ENCODE measurements at regions of chr21 and their contacts with region 1.

Region 1: DNA sequence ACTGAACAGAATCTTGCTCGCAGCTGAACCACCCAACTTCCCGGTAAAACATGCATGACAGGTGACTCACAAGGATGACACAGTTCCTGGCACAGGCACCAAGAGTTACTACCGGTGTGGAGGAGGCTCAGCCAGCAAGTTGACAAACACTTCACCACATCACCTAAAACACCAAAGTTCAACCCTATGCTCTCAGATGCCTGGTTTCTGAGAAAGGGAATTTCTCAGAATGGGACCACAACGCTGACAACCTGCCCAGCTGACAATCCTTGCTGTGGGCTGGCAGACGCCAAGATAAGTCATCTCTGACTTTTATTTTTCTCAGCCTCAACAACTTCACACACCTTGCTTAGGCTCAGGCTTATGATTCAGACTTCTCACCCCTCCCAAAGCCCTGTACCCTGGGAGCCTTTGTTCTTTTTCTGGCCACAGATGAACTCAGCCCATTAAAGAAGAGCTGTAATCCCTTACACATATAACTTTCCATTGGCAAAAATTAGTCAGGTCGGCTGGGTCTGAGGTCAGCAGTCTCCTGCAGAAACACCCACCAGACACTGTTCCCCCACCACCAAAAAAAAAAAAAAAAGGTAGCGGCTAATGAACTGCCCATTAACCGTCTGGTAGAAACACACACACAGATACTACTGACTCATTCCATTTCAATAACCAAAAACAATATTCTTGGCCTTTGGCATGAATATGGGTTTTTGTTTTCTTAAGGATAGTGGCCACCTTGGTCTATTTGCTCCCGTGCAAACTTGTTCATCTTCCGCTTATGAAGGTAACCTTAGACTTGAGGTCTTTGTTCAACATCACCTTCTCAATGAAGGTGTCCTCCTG is 10.8 kb upstream of the TIAM1 start:
- DNase-seq: peak; percentile 70
- ATAC-seq: peak; percentile 95
- H3K4me3 Mint-ChIP-seq: peak overlapping the region; percentile 43
- H3K27ac Mint-ChIP-seq: peak overlapping the region; percentile 85
- H3K4me1 Mint-ChIP-seq: peaks cover 35% of the 10 kb centered on the region
- H3K27me3 Mint-ChIP-seq: no peaks in the 10 kb centered on the region

Region 2: DNA sequence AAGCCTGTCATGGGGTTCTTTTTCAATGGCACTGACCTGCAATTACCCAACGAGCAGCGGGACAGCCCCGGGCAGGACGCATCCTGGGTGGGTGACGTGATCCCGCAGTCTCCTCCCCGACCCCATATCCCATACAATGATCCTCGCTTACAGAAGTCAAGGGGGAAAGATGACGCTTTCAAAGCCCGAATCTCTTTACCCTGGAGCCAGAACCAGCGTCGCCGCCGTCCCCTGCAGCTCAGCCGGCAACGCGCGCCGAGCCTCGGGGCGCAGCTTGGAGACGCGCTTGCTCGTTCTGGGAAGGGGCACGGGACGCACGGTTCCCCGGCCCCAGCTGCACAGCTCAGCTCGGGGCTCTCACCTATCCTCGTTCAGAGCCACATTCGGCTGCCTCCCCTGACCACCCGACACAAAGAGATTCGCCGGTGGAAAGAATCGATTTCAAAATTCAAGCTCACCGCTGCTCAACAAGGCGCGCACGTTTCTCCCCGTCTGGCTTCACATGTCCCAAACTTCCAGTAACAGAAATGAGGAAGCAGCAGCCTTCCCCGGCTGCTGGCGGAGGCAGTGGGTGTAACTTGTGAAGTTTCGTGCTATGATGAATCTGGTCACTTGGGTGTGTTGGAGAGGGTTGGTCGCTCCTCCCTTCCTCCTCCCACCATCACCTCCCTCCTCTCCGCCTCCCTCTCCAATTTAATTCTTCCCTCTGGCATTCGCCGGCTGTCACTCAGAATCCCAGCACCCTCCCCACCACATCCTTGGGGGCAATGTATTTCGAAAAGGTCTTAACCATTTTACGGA is 10.9 kb before region 1 on chr21 and contains the start of gene TIAM1:
- POLR2A ChIA-PET with region 1: interaction called, 10 read pairs
- DNase-seq: peak; percentile 40
- ATAC-seq: peak; percentile 61
- H3K4me3 Mint-ChIP-seq: peak within 1 kb of the TSS; percentile 90
- H3K27ac Mint-ChIP-seq: peak within 1 kb of the TSS; percentile 73
- H3K4me1 Mint-ChIP-seq: peaks cover 40% of the 10 kb centered on the region
- H3K27me3 Mint-ChIP-seq: peaks cover 41% of the 10 kb centered on the region
- total RNA-seq, gene TIAM1: 21.8 to 23.7 TPM

Region 3: DNA sequence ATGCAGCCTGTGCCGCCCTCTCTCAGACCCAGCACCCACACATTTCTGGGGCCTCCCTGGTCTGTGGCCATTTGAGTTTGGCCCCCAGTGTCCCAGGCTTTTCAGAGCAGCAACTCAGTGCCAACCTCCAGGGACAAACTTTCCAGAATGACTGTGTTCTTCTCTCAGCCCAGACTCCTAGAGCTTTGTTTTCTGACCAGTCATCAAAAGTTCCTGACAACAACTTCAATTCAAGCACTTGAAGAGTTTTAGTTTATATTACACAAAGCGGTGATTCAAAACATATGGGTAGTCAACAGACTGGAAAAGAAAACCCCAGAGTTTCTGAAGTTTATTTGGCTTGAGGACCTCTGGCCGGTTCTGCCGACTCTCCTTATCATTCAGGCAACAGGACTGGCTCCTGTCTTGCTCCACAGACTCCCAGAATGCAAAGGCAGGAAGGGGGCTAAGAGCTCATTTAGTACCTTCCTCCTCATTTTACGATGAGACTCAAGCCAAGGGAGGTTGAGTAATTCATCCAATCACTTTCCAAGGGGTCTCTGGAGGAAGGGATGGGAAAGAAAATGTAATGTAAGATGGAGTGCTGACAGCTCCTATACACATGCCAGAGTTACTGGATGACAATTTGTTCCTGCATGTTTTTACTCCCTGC is 16.2 kb after region 1 on chr21:
- POLR2A ChIA-PET with region 1: no interaction called
- DNase-seq: no peak
- ATAC-seq: no peak
- H3K4me3 Mint-ChIP-seq: no peak overlapping the region
- H3K27ac Mint-ChIP-seq: no peak overlapping the region
- H3K4me1 Mint-ChIP-seq: peaks cover 21% of the 10 kb centered on the region
- H3K27me3 Mint-ChIP-seq: peaks cover 7% of the 10 kb centered on the region

Region 4: DNA sequence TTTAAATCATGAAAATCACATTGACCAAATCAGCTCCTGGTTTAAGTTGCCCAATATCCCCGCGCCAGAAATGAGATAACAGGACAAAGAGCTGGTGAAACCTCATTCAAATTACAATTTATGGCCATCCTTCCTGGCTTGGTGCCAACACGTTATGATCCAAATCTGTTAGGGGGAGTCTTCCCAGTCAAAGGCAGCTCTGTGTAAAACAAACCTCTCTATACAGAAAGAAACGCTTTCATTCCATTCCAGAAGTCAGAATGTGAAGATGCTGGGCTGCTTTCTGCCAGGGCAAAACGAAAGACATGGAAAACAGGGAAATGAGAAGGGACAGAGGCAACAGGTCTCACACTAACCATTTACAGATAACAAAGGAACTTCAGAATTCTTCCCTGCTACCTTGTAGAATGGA is 42.7 kb after region 1 on chr21:
- POLR2A ChIA-PET with region 1: interaction called, 15 read pairs
- DNase-seq: no peak
- ATAC-seq: no peak
- H3K4me3 Mint-ChIP-seq: peak overlapping the region; percentile 55
- H3K27ac Mint-ChIP-seq: no peak overlapping the region
- H3K4me1 Mint-ChIP-seq: peaks cover 46% of the 10 kb centered on the region
- H3K27me3 Mint-ChIP-seq: peaks cover 3% of the 10 kb centered on the region

Region 5: GRCh38 chr21:31558962-31559367 is 204.1 kb after region 1 on chr21:
- POLR2A ChIA-PET with region 1: interaction called, 12 read pairs
- DNase-seq: peak; percentile 96
- ATAC-seq: peak; percentile 90
- H3K4me3 Mint-ChIP-seq: peak overlapping the region; percentile 97
- H3K27ac Mint-ChIP-seq: no peak overlapping the region
- H3K4me1 Mint-ChIP-seq: peaks cover 32% of the 10 kb centered on the region
- H3K27me3 Mint-ChIP-seq: peaks cover 21% of the 10 kb centered on the region